ENCODE measurements at regions of chr1 and their contacts with region 1.

Region 1: GRCh38 chr1:54273092-54273794 is 73.3 kb downstream of the MRPL37 start:
- DNase-seq: peak; percentile 84 to 91 (median 87)
- H3K4me3 ChIP-seq: peak overlapping the region; percentile 3
- H3K27ac ChIP-seq: peak overlapping the region; percentile 79 to 94
- H3K4me1 ChIP-seq: peaks cover 62% of the 10 kb centered on the region
- H3K27me3 ChIP-seq: no peaks in the 10 kb centered on the region
- CTCF ChIP-seq: peak; percentile 62 to 86 (median 83)
- EP300 ChIP-seq: peak; percentile 86
- POLR2A ChIP-seq: no peak

Region 2: DNA sequence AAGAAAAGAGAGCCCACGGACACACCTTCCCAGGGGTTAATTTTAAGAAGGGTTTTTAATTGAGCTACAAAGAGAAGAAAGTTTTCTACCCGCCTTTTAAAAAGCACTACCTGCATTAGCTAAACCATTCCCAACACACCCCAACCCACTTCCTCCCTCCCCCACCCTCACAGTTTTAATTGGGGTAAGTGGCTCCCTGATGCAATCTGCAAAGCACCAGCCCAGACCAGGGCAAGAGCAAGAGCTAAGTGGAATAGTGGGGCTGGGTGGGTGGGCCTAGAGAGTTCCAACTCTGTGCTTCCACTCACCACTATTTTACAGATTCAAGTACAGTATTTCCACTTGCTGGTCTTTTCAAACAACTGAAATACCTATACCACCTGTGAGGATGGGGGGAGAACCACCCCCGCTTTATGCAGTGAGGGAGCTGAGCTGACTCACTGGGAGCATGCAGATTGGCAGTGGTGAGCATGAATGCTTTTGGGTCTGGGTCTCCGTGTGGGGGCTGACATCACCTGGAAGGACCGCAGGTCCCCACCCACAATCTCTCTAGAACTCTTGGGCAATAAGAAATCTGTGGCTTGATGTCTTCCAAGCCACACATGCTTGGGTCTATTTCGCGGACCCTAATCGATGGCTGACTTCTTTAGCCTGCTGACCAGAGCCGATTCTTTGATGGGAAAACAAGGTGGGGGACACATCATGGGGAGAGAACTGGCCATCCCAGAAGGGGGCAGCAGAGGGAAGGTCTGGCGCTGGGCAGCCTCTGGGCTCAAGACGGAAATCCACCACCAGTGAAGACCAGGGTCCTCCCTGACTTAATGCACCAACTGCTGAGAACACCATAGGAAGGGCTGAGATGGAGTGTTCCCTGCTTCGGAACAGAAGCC is 37.4 kb after region 1 on chr1:
- intact Hi-C with region 1: loop called in 1 of 4 experiments (anchors 5 kb)
- DNase-seq: peak in 1 of 5 donors; percentile 45
- H3K4me3 ChIP-seq: no peak overlapping the region
- H3K27ac ChIP-seq: peak overlapping the region; percentile 34 to 70
- H3K4me1 ChIP-seq: peaks cover 49% of the 10 kb centered on the region
- H3K27me3 ChIP-seq: no peaks in the 10 kb centered on the region
- CTCF ChIP-seq: no peak
- EP300 ChIP-seq: no peak
- POLR2A ChIP-seq: no peak

Region 3: DNA sequence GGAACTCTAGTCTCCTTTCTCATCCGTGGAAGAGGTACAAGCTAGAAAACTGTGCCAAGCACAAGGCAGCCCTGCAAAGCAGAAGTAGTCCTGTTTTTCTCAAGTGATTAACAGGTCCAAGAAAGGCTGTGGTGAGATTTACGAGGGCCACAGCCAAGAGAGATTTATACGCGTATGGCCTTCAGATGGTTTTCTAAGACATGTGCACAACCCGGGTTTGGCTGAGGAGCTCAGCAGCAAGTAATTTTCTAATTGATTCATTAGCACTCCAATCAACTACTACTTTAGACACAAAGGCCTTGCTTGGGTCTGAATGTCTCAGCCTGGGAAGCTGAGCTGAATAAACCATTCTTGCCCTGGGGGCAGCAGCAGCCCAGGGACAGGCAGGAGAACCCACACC is 77.1 kb after region 1 on chr1:
- intact Hi-C with region 1: loop called in 1 of 4 experiments (anchors 5 kb)
- DNase-seq: no peak
- H3K4me3 ChIP-seq: no peak overlapping the region
- H3K27ac ChIP-seq: no peak overlapping the region
- H3K4me1 ChIP-seq: peaks cover 31% of the 10 kb centered on the region
- H3K27me3 ChIP-seq: no peaks in the 10 kb centered on the region
- CTCF ChIP-seq: no peak
- EP300 ChIP-seq: no peak
- POLR2A ChIP-seq: no peak

Region 4: GRCh38 chr1:54488779-54489626 is 215.8 kb after region 1 on chr1:
- intact Hi-C with region 1: loop called in 3 of 4 experiments (anchors 2 to 10 kb)
- DNase-seq: peak; percentile 91 to 95 (median 92)
- H3K4me3 ChIP-seq: peak overlapping the region; percentile 54
- H3K27ac ChIP-seq: peak overlapping the region; percentile 88 to 92
- H3K4me1 ChIP-seq: peaks cover 13% of the 10 kb centered on the region
- H3K27me3 ChIP-seq: no peaks in the 10 kb centered on the region
- CTCF ChIP-seq: peak; percentile 94 to 98 (median 97)
- EP300 ChIP-seq: no peak
- POLR2A ChIP-seq: peak; percentile 17

Measured in ovary (tissue), 10 donors.